ENCODE measurements at regions of chr22 and their contacts with region 1.

Region 1: GRCh38 chr22:30289134-30289979 is at the start of gene CASTOR1:
- DNase-seq: peak; percentile 99
- ATAC-seq: peak; percentile 89
- total RNA-seq, gene CASTOR1: 5.3 TPM

Region 2: DNA sequence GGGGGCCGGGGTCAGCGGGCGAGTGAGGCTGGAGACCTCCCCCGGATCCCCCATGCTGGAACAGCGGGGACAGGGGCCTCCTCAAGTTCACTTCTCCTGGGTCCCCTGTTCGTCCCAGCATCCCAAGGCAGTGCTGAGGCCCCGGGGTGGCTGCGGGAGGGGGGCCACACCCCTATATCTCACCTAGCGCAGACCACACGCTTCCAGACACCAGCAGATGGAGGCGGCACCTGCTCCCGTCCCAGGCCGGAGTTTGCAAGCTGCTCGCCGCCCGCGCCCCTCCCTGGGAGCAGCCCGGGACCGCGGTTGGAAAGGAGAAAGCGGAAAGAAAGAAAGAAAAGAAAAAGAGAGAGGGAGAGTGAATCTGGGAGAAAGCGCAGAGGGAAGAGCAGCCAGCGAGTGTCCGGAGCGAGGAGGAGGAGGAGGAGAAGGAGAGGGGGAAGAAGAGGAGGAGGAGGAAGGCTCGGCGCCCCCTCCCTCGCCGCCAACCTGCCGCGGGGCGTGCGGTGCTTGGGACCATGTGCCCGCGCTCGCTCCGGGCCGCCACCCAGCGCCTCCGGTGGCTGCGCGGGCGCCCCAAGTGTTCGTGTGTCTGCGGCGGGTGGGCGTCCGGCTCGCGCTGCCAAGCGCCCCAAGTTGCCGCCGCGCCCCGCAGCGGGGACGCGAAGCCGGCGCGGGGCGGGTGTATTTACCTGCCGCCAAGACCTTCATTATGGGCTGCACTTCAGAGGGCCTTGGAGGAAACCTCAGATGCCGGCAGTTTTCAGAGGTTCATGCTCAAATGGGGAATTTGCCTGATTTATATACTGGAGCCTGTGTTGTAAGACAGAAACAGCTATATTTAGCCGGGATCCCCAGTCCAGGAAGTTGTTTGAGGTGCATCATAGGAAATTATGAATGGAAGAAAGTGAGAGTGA is 43.1 kb before region 1 on chr22 and contains the start of gene LIF:
- intact Hi-C with region 1: no loop called
- DNase-seq: no peak
- ATAC-seq: peak; percentile 29
- total RNA-seq, gene LIF: 0.54 TPM

Region 3: GRCh38 chr22:30326706-30327362 is 37.5 kb after region 1 on chr22 and contains the start of gene TBC1D10A:
- intact Hi-C with region 1: loop called (anchors 2 kb)
- DNase-seq: peak; percentile 94
- ATAC-seq: peak; percentile 98
- total RNA-seq, gene TBC1D10A: 6.5 TPM

Region 4: GRCh38 chr22:30453731-30454510 is 164.6 kb after region 1 on chr22:
- intact Hi-C with region 1: no loop called
- DNase-seq: no peak
- ATAC-seq: no peak

Measured in Right ventricle myocardium superior (tissue), 1 donor.